B cell (primary cell): ENCODE measurements at regions of chr19 and their contacts with region 1.

Region 1: DNA sequence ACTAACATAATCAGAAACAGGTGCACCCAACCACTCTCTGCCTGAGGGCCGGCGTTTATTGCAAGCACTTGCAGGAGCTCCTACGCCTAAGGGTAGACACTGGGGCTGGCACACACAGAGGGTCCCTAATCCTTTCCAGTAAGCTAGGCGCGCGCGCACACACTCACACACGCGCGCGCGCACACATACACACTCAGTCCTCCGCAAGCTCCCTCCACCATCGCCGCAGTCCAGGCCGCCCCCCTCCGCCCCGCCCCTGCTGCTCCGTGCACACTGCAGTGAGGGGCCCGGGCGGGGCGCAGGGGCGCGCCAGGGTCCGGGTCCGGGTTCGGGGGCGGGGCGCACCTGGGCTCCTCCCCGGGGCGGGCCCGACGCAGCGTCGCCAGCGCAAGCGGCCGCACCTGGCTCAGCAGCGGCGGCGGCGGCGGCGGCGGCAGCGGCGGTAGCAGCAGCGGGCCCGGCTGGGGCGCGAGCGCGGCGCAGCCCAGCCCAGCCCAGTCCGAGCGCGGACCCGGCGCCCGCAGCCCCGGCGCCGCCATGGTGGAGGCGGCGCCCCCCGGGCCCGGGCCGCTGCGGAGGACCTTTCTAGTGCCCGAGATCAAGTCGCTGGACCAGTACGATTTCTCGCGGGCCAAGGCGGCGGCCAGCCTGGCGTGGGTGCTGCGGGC is at the start of gene CAMSAP3:
- DNase-seq: peak; percentile 66
- ATAC-seq: peak; percentile 82
- H3K4me3 ChIP-seq: peak within 1 kb of the TSS in 3 of 5 experiments; percentile 38 to 61 (median 47)
- H3K4me3 Mint-ChIP-seq: peak within 1 kb of the TSS; percentile 87
- H3K27ac ChIP-seq: no peak within 1 kb of the TSS
- H3K27ac Mint-ChIP-seq: peak within 1 kb of the TSS; percentile 15
- H3K4me1 ChIP-seq: peaks cover 11 to 13% of the 10 kb centered on the region in 2 donors
- H3K4me1 Mint-ChIP-seq: peaks cover 11% of the 10 kb centered on the region
- H3K27me3 ChIP-seq: peaks cover 0 to 47% (median 11%) of the 10 kb centered on the region in 4 experiments
- H3K27me3 Mint-ChIP-seq: peaks cover 40% of the 10 kb centered on the region
- CTCF ChIP-seq: no peak
- total RNA-seq, gene CAMSAP3: 1.3 and 1.9 TPM in 2 replicates

Region 2: DNA sequence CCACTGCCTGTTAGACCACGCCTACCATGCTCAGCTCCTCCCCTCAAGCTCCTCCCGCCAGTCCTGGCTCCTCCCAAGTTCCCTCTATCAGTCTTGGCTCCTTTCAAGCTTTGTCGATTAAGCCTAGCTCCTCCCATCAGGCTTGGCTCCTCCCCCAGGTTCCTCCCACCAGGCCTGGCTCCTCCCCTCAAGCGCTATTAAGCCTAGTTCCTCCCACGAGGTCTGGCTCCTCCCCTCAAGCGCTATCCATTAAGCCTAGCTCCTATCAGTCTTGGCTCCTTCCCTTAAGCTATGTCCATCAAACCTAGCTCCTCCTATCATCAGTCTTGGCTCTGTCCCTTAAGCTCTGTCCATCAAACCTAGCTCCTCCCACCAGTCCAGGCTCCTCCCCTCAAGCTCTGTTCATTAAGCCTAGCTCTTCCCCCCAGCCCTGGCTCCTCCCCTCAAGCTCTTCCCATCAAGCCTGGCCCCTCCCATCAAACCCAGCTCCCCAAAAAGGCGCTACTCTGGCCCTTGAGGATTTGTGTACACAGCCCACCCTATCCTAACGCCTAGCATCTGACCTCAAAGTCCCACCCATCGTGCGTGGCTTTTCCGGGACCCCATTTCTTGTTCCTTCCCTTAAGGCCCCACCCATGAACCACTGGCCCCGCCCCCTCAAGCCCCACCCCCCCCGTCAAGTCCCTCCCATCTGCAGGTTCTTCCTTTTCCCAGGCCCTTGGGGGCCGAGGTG is 10.1 kb after region 1 on chr19:
- CTCF ChIA-PET with region 1: no interaction called
- POLR2A ChIA-PET with region 1: interaction called, 10 read pairs
- intact Hi-C with region 1: no loop called
- DNase-seq: peak; percentile 52
- ATAC-seq: no peak
- H3K4me3 ChIP-seq: no peak overlapping the region
- H3K4me3 Mint-ChIP-seq: no peak overlapping the region
- H3K27ac ChIP-seq: no peak overlapping the region
- H3K27ac Mint-ChIP-seq: no peak overlapping the region
- H3K4me1 ChIP-seq: no peaks in the 10 kb centered on the region
- H3K4me1 Mint-ChIP-seq: no peaks in the 10 kb centered on the region
- H3K27me3 ChIP-seq: peaks cover 0 to 23% (median 0%) of the 10 kb centered on the region in 4 experiments
- H3K27me3 Mint-ChIP-seq: peaks cover 14% of the 10 kb centered on the region
- CTCF ChIP-seq: no peak